H1 (cell line): ENCODE measurements at regions of chr2 and their contacts with region 1.

Region 1: GRCh38 chr2:207473049-207473930 is 56.5 kb upstream of the CREB1 start:
- DNase-seq: peak in 1 of 2 experiments; percentile 44
- H3K4me3 ChIP-seq: no peak overlapping the region
- H3K27ac ChIP-seq: no peak overlapping the region
- H3K4me1 ChIP-seq: peaks cover 4 to 12% (median 5%) of the 10 kb centered on the region in 4 experiments; a peak in 4 of 7 replicates
- H3K27me3 ChIP-seq: no peaks in the 10 kb centered on the region
- CTCF ChIP-seq: peak in 2 of 3 experiments; percentile 80 to 83; a peak in 3 of 4 replicates
- EP300 ChIP-seq: no peak
- POLR2A ChIP-seq: no peak
- RAD21 ChIP-seq: peak; percentile 94 to 99

Region 2: GRCh38 chr2:206981739-206982340 is 491.4 kb before region 1 on chr2:
- CTCF ChIA-PET with region 1: interaction called, 56 read pairs
- POLR2A ChIA-PET with region 1: no interaction called
- DNase-seq: peak; percentile 56 to 78
- H3K4me3 ChIP-seq: no peak overlapping the region
- H3K27ac ChIP-seq: no peak overlapping the region
- H3K4me1 ChIP-seq: peaks cover 0 to 13% (median 12%) of the 10 kb centered on the region in 4 experiments; a peak in 5 of 7 replicates
- H3K27me3 ChIP-seq: no peaks in the 10 kb centered on the region
- CTCF ChIP-seq: peak; percentile 77 to 93 (median 86)
- EP300 ChIP-seq: no peak
- POLR2A ChIP-seq: no peak
- RAD21 ChIP-seq: peak; percentile 98

Region 3: GRCh38 chr2:206989306-206989705 is 484.0 kb before region 1 on chr2:
- CTCF ChIA-PET with region 1: interaction called, 56 read pairs
- POLR2A ChIA-PET with region 1: no interaction called
- DNase-seq: peak; percentile 29 to 61
- H3K4me3 ChIP-seq: no peak overlapping the region
- H3K27ac ChIP-seq: no peak overlapping the region
- H3K4me1 ChIP-seq: no peaks in the 10 kb centered on the region
- H3K27me3 ChIP-seq: no peaks in the 10 kb centered on the region
- CTCF ChIP-seq: peak; percentile 74 to 93 (median 90)
- EP300 ChIP-seq: no peak
- POLR2A ChIP-seq: no peak
- RAD21 ChIP-seq: peak; percentile 68 to 79

Region 4: GRCh38 chr2:207143215-207144172 is 329.8 kb before region 1 on chr2:
- CTCF ChIA-PET with region 1: interaction called, 13 read pairs
- POLR2A ChIA-PET with region 1: no interaction called
- DNase-seq: peak in 1 of 2 experiments; percentile 49
- H3K4me3 ChIP-seq: no peak overlapping the region
- H3K27ac ChIP-seq: no peak overlapping the region
- H3K4me1 ChIP-seq: peaks cover 3 to 14% (median 8%) of the 10 kb centered on the region in 4 experiments; a peak in 5 of 7 replicates
- H3K27me3 ChIP-seq: no peaks in the 10 kb centered on the region
- CTCF ChIP-seq: no peak
- EP300 ChIP-seq: no peak
- POLR2A ChIP-seq: no peak
- RAD21 ChIP-seq: no peak

Region 5: DNA sequence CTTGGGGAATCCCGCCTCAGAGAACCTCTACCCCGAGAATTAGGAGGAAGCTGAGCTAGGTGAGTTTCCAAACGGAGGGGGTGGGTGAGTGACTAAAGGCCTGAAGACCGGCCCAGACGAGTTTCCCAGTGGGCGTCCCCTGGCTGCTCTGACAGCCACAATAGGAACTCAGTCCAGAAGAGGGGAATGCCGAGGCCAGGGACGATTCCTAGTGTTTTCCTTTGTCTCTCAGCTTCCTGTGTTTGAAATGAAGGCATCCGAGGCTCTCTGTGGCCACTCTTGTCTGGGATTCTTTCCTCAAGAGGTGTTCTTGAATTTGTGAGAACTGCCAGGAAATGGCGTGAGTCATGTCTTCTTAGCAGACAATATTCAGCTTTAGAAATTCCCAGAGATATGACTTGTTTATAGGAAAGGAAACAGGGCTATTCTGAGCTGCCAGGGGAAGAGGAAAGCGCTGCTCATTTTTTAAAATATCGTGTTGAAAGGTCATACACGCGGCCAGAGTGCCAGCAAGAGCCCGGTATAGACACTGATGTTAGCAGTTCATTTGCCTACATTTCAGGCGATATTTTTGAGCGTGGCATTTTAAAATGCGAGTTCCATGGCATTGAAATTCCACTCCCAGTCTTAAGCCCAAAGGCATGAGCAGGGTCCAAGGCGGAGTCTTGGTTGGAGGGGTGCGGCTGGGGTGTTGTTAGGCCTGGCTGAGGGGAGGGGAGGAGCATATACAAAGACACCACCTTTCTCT is 138.5 kb before region 1 on chr2:
- CTCF ChIA-PET with region 1: interaction called, 15 read pairs
- POLR2A ChIA-PET with region 1: interaction called, 3 read pairs
- DNase-seq: peak; percentile 64 to 79
- H3K4me3 ChIP-seq: peak overlapping the region in 3 of 4 experiments; percentile 6 to 49 (median 12); a peak in 4 of 8 replicates
- H3K27ac ChIP-seq: peak overlapping the region; percentile 77
- H3K4me1 ChIP-seq: peaks cover 4 to 20% (median 17%) of the 10 kb centered on the region in 4 experiments; a peak in 6 of 7 replicates
- H3K27me3 ChIP-seq: no peaks in the 10 kb centered on the region
- CTCF ChIP-seq: no peak
- EP300 ChIP-seq: peak in 1 of 2 experiments; percentile 81; a peak in 1 of 3 replicates
- POLR2A ChIP-seq: peak; percentile 49 to 84
- RAD21 ChIP-seq: peak in 1 of 2 experiments; percentile 26; a peak in 1 of 4 replicates

Region 6: DNA sequence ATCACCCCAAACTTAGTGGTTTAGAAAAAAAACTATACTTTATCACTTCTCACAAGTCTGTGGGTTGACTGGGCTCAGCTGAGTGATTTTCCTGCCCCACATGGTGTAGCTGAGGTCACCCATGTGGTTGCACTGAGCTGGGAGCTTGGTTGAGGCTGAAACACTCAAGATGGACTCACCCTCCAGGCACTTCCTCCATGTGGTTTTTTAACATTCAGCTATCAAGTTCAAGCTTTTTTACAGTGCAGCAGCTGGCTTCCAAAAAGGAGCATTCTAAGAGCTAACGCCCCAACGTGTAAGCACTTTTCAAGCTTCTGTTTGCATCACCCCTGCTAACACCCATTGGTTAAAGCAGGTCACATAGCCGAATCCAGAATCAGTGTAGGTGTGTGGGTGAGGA is 49.4 kb before region 1 on chr2:
- CTCF ChIA-PET with region 1: interaction called, 11 read pairs
- POLR2A ChIA-PET with region 1: no interaction called
- DNase-seq: no peak
- H3K4me3 ChIP-seq: no peak overlapping the region
- H3K27ac ChIP-seq: no peak overlapping the region
- H3K4me1 ChIP-seq: peaks cover 0 to 6% (median 3%) of the 10 kb centered on the region in 4 experiments; a peak in 3 of 7 replicates
- H3K27me3 ChIP-seq: no peaks in the 10 kb centered on the region
- CTCF ChIP-seq: no peak
- EP300 ChIP-seq: no peak
- POLR2A ChIP-seq: no peak
- RAD21 ChIP-seq: no peak